ENCODE measurements at regions of chr2 and their contacts with region 1.

Region 1: DNA sequence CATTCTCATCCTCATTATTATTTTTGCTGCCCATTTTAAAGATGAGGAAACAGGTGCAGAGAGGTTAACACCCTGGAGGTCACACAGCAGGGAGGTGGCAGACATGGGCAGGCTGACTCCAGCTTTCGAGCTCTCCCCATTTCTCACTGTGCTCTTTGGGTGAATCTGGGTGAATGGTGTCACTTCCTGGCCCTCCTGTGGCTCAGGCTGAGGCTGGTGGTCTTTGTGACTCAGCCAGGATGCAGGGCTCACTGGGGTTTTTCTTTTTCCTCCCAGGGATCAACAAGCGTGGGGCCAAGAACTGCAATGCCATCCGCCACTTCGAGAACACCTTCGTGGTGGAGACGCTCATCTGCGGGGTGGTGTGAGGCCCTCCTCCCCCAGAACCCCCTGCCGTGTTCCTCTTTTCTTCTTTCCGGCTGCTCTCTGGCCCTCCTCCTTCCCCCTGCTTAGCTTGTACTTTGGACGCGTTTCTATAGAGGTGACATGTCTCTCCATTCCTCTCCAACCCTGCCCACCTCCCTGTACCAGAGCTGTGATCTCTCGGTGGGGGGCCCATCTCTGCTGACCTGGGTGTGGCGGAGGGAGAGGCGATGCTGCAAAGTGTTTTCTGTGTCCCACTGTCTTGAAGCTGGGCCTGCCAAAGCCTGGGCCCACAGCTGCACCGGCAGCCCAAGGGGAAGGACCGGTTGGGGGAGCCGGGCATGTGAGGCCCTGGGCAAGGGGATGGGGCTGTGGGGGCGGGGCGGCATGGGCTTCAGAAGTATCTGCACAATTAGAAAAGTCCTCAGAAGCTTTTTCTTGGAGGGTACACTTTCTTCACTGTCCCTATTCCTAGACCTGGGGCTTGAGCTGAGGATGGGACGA is 13.2 kb downstream of the ITM2C start:
- DNase-seq: no peak
- ATAC-seq: no peak
- H3K4me3 ChIP-seq: no peak overlapping the region
- H3K27ac ChIP-seq: no peak overlapping the region
- H3K4me1 ChIP-seq: no peaks in the 10 kb centered on the region
- H3K27me3 ChIP-seq: no peaks in the 10 kb centered on the region
- CTCF ChIP-seq: no peak

Region 2: GRCh38 chr2:230949966-230950873 is 72.3 kb after region 1 on chr2:
- CTCF ChIA-PET with region 1: no interaction called
- POLR2A ChIA-PET with region 1: no interaction called
- in situ Hi-C with region 1: loop called (anchors 5 kb)
- intact Hi-C with region 1: no loop called
- DNase-seq: no peak
- ATAC-seq: no peak; the same call in 1 of the 2 replicates
- H3K4me3 ChIP-seq: no peak overlapping the region
- H3K27ac ChIP-seq: no peak overlapping the region
- H3K4me1 ChIP-seq: no peaks in the 10 kb centered on the region
- H3K27me3 ChIP-seq: peaks cover 1% of the 10 kb centered on the region; the same call in 1 of the 2 replicates
- CTCF ChIP-seq: no peak

Region 3: GRCh38 chr2:231182513-231182899 is 304.5 kb after region 1 on chr2:
- CTCF ChIA-PET with region 1: no interaction called
- POLR2A ChIA-PET with region 1: interaction called, 12 read pairs
- in situ Hi-C with region 1: no loop called
- intact Hi-C with region 1: no loop called
- DNase-seq: no peak
- ATAC-seq: no peak
- H3K4me3 ChIP-seq: no peak overlapping the region
- H3K27ac ChIP-seq: peak overlapping the region; percentile 36
- H3K4me1 ChIP-seq: peaks cover 32% of the 10 kb centered on the region
- H3K27me3 ChIP-seq: no peaks in the 10 kb centered on the region
- CTCF ChIP-seq: no peak